ENCODE measurements at regions of chr2 and their contacts with region 1.

Region 1: GRCh38 chr2:156400706-156401678 is 35.2 kb upstream of the GPD2 start:
- DNase-seq: peak; percentile 82
- H3K4me3 Mint-ChIP-seq: peak overlapping the region; percentile 84
- H3K27ac Mint-ChIP-seq: peak overlapping the region; percentile 95
- H3K4me1 Mint-ChIP-seq: peaks cover 18% of the 10 kb centered on the region
- H3K27me3 Mint-ChIP-seq: peaks cover 5% of the 10 kb centered on the region

Region 2: DNA sequence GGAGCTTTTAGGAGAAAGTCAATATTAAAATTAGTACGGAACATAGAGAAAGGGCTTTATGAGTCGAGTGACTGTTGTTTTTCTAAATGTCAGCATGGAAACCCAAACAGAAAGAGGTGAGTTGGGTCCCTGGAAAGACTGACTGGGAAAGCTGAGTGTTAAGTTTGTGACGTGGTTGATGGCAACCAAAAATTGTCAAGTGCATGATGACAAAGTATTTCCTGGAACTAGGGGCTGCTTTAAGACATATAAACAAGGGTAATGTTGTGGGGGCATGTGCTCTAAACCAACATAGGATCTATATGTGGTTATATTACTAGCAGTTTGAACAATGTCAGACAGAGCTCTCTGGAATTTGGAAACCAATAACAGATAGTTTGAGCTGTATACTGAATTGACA is 15.8 kb before region 1 on chr2:
- CTCF ChIA-PET with region 1: no interaction called
- POLR2A ChIA-PET with region 1: interaction called, 14 read pairs
- intact Hi-C with region 1: loop called (anchors 1 kb)
- DNase-seq: peak; percentile 37
- H3K4me3 Mint-ChIP-seq: no peak overlapping the region
- H3K27ac Mint-ChIP-seq: peak overlapping the region; percentile 46
- H3K4me1 Mint-ChIP-seq: peaks cover 21% of the 10 kb centered on the region
- H3K27me3 Mint-ChIP-seq: peaks cover 6% of the 10 kb centered on the region

Region 3: GRCh38 chr2:156435715-156436496 is 34.9 kb after region 1 on chr2 and contains the start of gene GPD2:
- CTCF ChIA-PET with region 1: no interaction called
- POLR2A ChIA-PET with region 1: interaction called, 12 read pairs
- intact Hi-C with region 1: loop called (anchors 1 kb)
- DNase-seq: peak; percentile 67
- H3K4me3 Mint-ChIP-seq: peak within 1 kb of the TSS; percentile 89
- H3K27ac Mint-ChIP-seq: peak within 1 kb of the TSS; percentile 82
- H3K4me1 Mint-ChIP-seq: peaks cover 28% of the 10 kb centered on the region
- H3K27me3 Mint-ChIP-seq: no peaks in the 10 kb centered on the region
- total RNA-seq, gene GPD2: 27.3 to 28.6 TPM

Region 4: DNA sequence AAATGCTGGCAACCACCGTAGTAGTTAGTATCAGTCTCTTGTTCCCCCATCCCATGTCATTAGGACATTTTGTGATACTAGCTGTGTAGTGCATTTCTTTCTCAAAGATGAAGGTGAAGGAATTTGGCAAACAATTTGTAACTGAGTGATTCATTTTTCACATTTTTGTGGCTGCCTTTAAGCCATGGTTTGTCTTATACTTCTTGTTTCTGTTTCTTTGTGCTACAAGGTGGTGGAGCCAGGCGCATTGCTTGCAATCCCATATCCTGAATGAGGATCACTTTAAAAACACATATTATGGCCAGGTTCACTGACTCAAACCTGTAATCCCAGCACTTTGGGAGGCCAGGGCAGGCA is 75.8 kb after region 1 on chr2:
- CTCF ChIA-PET with region 1: no interaction called
- POLR2A ChIA-PET with region 1: no interaction called
- intact Hi-C with region 1: loop called (anchors 1 kb)
- DNase-seq: peak; percentile 35
- H3K4me3 Mint-ChIP-seq: no peak overlapping the region
- H3K27ac Mint-ChIP-seq: peak overlapping the region; percentile 53
- H3K4me1 Mint-ChIP-seq: peaks cover 38% of the 10 kb centered on the region
- H3K27me3 Mint-ChIP-seq: no peaks in the 10 kb centered on the region

Region 5: DNA sequence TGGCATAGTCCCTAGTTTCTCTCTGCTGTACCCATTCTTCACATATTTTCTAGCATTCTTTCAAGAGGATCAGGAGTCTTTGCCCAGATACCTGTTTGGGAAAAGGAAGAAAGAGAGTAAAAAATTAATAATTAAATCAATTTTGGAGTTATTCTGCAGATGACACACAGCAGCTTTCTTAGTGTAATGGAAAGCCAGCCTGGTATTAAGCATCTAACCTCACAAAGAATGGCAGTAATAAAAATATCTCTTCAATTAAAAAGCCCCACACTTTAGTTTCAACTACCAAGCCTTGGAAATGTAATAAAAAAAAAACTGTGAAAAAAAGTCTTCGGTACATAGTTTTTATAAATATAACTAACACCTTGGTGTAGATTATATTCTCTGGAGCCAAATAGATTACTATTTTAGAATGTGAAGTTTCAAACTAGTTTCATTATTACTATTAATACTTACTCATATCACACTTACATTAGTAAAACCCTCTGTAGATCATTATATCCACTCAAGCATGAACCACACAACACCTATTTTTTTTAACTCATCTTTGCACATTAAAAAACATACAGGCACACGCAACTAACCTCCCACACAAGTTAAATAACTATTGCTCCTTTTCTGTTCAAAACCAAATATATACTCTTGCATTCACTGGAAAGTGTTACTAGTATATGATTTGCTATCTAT is 126.1 kb after region 1 on chr2:
- CTCF ChIA-PET with region 1: no interaction called
- POLR2A ChIA-PET with region 1: no interaction called
- intact Hi-C with region 1: loop called (anchors 2 kb)
- DNase-seq: no peak
- H3K4me3 Mint-ChIP-seq: no peak overlapping the region
- H3K27ac Mint-ChIP-seq: no peak overlapping the region
- H3K4me1 Mint-ChIP-seq: peaks cover 9% of the 10 kb centered on the region
- H3K27me3 Mint-ChIP-seq: no peaks in the 10 kb centered on the region

Measured in activated CD4-positive, alpha-beta memory T cell treated with anti-CD3 and anti-CD28 coated beads for 36 hours (primary cell).